ENCODE measurements at regions of chr2 and their contacts with region 1.

Region 1: DNA sequence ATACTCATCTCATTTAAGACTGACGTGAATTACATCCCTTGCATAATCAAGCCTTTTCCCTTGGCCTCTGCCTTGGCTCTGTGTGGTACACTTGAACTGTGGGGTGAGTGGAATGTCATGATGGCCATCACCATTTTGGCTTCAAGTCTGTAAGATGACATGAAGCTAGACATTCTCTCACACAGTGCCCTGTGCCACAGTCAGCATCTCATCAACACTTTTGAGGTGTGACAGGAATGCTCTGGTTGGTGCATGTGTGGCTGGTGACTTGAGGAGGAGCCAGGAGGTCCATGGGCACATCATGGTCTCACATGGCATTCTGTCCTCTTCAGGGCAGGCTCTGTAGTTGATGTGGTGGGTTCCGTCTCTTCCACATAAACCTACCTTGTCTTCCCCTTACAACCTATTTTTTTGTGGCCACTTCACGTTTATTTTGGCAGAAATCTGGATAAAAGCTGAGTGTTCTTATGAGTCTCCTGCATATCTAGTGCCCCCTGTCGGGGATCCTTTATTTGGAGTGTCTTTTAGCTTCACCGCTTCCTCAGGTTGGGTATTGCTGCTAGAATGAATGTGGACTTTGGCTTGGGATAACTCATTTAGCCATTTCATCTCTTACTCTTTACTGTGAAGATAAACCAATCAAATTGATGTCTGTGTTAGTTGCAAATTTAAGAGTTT is 28.1 kb downstream of the MAP4K4 start:
- DNase-seq: peak; percentile 60
- ATAC-seq: no peak
- H3K4me3 ChIP-seq: no peak overlapping the region
- H3K4me3 Mint-ChIP-seq: peak overlapping the region; percentile 36
- H3K27ac ChIP-seq: peak overlapping the region in 1 of 2 donors; percentile 86
- H3K27ac Mint-ChIP-seq: peak overlapping the region; percentile 64
- H3K4me1 ChIP-seq: peaks cover 92 to 99% of the 10 kb centered on the region in 2 donors
- H3K4me1 Mint-ChIP-seq: peaks cover 94% of the 10 kb centered on the region
- H3K27me3 ChIP-seq: no peaks in the 10 kb centered on the region
- H3K27me3 Mint-ChIP-seq: no peaks in the 10 kb centered on the region
- CTCF ChIP-seq: peak; percentile 56

Region 2: GRCh38 chr2:101608408-101609317 is 117.0 kb before region 1 on chr2:
- CTCF ChIA-PET with region 1: no interaction called
- POLR2A ChIA-PET with region 1: no interaction called
- intact Hi-C with region 1: no loop called
- DNase-seq: no peak
- ATAC-seq: no peak
- H3K4me3 ChIP-seq: no peak overlapping the region
- H3K4me3 Mint-ChIP-seq: no peak overlapping the region
- H3K27ac ChIP-seq: no peak overlapping the region
- H3K27ac Mint-ChIP-seq: no peak overlapping the region
- H3K4me1 ChIP-seq: peaks cover 15 to 25% of the 10 kb centered on the region in 2 donors
- H3K4me1 Mint-ChIP-seq: peaks cover 25% of the 10 kb centered on the region
- H3K27me3 ChIP-seq: no peaks in the 10 kb centered on the region
- H3K27me3 Mint-ChIP-seq: no peaks in the 10 kb centered on the region
- CTCF ChIP-seq: no peak

Region 3: GRCh38 chr2:101688261-101688660 is 37.4 kb before region 1 on chr2:
- CTCF ChIA-PET with region 1: no interaction called
- POLR2A ChIA-PET with region 1: no interaction called
- intact Hi-C with region 1: loop called (anchors 5 kb)
- DNase-seq: no peak
- ATAC-seq: no peak
- H3K4me3 ChIP-seq: no peak overlapping the region
- H3K4me3 Mint-ChIP-seq: no peak overlapping the region
- H3K27ac ChIP-seq: no peak overlapping the region
- H3K27ac Mint-ChIP-seq: no peak overlapping the region
- H3K4me1 ChIP-seq: no peaks in the 10 kb centered on the region
- H3K4me1 Mint-ChIP-seq: peaks cover 9% of the 10 kb centered on the region
- H3K27me3 ChIP-seq: no peaks in the 10 kb centered on the region
- H3K27me3 Mint-ChIP-seq: no peaks in the 10 kb centered on the region
- CTCF ChIP-seq: no peak

Region 4: DNA sequence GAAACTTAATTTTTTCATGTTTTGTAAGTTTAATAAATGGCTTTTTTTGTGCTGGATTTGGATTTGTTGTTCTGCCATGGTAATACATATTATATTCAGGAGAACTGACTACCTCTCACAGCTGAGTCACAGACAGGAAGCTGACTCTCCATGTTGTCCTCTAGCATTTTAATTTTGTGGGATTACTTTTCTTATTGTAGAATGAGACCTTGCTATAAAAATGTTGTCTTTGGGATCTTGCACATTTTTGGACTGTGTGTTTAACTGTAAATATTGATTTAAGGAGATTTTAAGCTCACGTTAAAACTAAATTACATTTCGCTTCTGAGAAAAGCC is 20.7 kb after region 1 on chr2:
- CTCF ChIA-PET with region 1: interaction called, 8 read pairs
- POLR2A ChIA-PET with region 1: no interaction called
- intact Hi-C with region 1: loop called (anchors 2 kb)
- DNase-seq: no peak
- ATAC-seq: no peak
- H3K4me3 ChIP-seq: no peak overlapping the region
- H3K4me3 Mint-ChIP-seq: no peak overlapping the region
- H3K27ac ChIP-seq: peak overlapping the region in 1 of 2 donors; percentile 5
- H3K27ac Mint-ChIP-seq: no peak overlapping the region
- H3K4me1 ChIP-seq: peaks cover 74 to 75% of the 10 kb centered on the region in 2 donors
- H3K4me1 Mint-ChIP-seq: peaks cover 73% of the 10 kb centered on the region
- H3K27me3 ChIP-seq: no peaks in the 10 kb centered on the region
- H3K27me3 Mint-ChIP-seq: no peaks in the 10 kb centered on the region
- CTCF ChIP-seq: no peak

Region 5: GRCh38 chr2:101770726-101771125 is 45.1 kb after region 1 on chr2:
- CTCF ChIA-PET with region 1: no interaction called
- POLR2A ChIA-PET with region 1: no interaction called
- intact Hi-C with region 1: no loop called
- DNase-seq: peak; percentile 59
- ATAC-seq: no peak
- H3K4me3 ChIP-seq: no peak overlapping the region
- H3K4me3 Mint-ChIP-seq: peak overlapping the region; percentile 30
- H3K27ac ChIP-seq: no peak overlapping the region
- H3K27ac Mint-ChIP-seq: peak overlapping the region; percentile 73
- H3K4me1 ChIP-seq: peaks cover 70 to 82% of the 10 kb centered on the region in 2 donors
- H3K4me1 Mint-ChIP-seq: peaks cover 91% of the 10 kb centered on the region
- H3K27me3 ChIP-seq: no peaks in the 10 kb centered on the region
- H3K27me3 Mint-ChIP-seq: no peaks in the 10 kb centered on the region
- CTCF ChIP-seq: peak; percentile 60